ENCODE measurements at regions of chr13 and their contacts with region 1.

Region 1: DNA sequence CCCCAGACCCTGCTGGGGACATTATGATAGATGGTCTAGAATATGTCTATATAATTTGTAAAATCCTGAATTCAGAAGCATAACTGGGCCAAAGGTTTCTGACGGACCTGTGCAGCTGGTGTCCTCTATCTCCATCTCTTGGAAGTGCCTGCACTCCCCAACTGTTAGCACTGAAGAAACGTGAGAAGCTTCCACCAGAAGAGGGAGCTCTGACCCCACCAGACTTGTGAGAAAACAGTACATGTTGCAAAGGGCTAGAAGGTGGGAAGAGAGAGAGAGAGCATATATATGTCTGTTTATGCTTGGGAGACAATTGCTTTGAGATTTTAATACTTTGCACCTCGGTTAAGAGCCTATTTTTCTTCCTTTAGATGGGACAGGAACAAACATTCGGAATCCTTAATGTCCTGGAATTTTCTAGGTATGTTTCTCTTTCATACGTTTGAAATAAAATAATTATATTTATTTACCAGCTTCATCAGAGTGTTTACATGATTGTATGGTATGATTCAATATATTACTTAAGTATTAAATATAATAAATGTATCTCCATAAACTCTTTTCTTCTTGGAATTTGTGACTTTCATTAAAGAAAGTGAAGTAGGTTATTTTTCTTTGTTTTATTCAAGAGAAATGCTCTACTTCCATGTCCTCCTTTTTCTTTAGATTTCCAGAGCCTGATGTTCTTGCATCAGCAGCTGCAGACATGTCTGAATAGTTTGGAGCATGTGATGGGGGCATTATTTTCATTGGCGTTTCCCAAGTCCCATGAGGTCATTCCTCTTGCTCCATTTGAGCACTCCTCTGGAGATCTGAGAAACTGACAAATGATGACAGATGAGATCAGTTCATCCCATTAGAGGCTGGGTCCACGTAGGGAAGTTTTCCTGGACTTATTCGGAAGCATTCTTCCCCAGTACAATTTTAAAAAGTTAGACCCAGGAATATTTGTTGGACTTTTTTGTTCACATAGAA is 202.9 kb downstream of the ATP8A2 start:
- DNase-seq: peak; percentile 48
- ATAC-seq: peak; percentile 88

Region 2: DNA sequence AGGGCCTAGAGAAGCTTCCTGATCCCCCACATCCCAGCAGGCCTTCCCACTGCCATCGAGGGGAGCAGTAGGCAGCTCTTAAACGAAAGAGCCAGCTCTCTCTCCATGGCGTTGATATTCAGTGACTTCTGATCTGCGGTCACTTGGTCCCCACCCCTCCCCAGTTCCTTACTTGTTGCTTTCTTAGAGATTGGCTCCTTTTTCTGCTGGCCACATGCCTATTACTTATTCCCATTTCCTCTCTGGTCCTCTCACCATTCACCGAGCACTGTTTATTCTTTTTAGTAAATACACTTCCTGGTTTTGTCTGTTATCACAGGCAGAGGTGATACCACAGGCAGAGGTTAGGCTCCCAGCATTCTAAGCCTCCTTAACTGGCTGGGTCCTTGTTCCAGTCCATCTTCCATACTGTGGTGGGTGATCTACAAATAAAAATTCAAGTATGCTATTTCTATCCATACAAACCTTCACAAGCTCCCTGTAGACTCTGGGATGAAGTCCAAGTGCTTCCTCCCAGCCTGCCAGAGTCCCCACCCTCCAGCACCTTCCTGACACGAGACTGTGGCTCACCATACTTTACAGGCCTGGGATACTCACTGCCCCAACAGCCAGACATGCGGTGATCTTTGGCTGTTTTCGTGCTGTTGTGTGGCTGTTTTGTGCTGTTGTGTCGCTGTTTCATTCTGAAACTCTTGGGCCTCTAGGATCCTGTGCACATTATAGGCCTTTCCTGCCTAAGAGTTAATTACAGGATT is 112.9 kb after region 1 on chr13:
- intact Hi-C with region 1: no loop called
- DNase-seq: peak; percentile 32
- ATAC-seq: peak; percentile 72

Region 3: GRCh38 chr13:26062844-26063444 is 488.2 kb after region 1 on chr13:
- intact Hi-C with region 1: loop called (anchors 5 kb)
- DNase-seq: no peak
- ATAC-seq: peak; percentile 84

Region 4: DNA sequence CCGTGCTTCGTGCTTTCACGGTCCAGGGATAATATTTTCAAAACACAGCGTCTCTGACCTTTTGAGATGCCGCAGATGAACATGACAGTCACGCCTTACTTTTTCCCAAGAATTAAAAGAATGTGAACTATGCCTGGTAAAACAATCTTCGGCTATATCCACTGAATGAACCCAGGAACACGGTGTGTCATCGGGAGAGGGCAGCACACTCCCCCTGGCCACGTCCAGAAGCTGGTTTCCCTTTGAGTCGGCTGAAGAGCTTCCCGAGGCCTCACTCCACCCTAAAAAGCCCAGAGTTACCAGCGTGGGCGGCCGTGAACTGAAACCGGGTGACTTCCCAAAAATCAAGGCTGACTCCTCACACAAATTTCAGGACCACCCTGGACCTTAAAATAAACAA is 500.0 kb after region 1 on chr13:
- intact Hi-C with region 1: loop called (anchors 5 kb)
- DNase-seq: no peak
- ATAC-seq: no peak